Aorta (tissue), 5 donors: ENCODE measurements at regions of chr9 and their contacts with region 1.

Region 1: DNA sequence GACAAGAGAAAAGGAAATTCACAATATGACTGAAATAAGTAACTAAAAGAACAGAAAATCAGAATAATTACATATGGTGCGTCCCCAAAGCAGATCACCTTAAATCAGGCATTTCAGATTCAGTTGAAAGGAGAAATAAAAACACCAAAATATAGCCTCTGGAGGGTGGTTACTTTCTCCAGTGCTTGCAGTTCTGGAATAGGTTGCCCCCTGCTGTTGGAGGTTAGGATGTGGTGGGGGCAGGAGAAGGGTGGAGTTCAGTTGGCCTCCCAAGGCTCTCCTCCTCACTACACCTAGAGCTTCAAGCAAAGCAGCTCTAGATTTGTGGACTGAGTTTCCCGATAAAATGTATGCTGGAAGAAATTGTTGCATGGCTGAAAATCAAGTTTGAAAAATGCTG is 338.2 kb upstream of the TLE4 start:
- DNase-seq: no peak
- ATAC-seq: no peak
- H3K4me3 ChIP-seq: no peak overlapping the region
- H3K27ac ChIP-seq: no peak overlapping the region
- H3K4me1 ChIP-seq: no peaks in the 10 kb centered on the region
- H3K27me3 ChIP-seq: no peaks in the 10 kb centered on the region

Region 2: DNA sequence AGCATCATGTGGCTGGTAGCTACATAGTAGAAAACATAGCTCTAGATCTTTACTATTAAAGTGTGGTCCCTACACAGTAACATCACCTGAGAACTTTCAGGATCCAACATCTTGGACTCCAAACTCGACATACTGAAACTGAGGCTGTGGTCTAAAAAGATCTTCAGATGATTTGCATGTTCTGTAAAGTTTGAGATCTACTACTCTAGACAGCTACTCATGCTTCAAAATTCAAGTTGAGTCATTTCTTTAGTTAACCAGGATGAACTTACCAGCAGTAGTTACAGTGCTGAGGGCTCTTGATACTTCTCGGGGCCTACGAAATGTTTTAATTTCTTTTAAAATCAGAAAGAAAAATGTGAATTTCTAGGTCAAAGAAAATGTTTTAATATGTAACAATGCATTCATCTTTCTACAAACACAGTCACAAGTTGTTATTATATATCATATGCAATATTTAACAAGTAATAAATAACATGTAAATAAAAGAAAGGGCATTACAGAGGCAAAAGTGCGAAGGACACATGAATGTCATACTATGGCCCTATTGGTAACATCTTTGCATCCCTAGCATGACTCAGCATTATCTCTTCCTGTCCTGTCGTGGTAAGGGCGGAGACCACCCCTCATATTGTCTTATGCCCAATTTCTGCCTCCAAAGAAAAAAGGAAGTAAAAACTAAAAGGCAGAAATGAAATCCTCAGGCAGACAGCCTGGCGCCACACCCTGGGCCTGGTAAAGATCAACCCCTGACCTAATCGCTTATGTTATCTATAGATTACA is 225.7 kb before region 1 on chr9:
- intact Hi-C with region 1: no loop called
- DNase-seq: no peak
- ATAC-seq: no peak
- H3K4me3 ChIP-seq: no peak overlapping the region
- H3K27ac ChIP-seq: no peak overlapping the region
- H3K4me1 ChIP-seq: no peaks in the 10 kb centered on the region
- H3K27me3 ChIP-seq: no peaks in the 10 kb centered on the region

Region 3: GRCh38 chr9:79129865-79130480 is 103.6 kb before region 1 on chr9:
- intact Hi-C with region 1: loop called in 1 of 2 experiments (anchors 5 kb)
- DNase-seq: peak; percentile 64 to 72
- ATAC-seq: peak; percentile 60
- H3K4me3 ChIP-seq: no peak overlapping the region
- H3K27ac ChIP-seq: no peak overlapping the region
- H3K4me1 ChIP-seq: no peaks in the 10 kb centered on the region
- H3K27me3 ChIP-seq: no peaks in the 10 kb centered on the region

Region 4: DNA sequence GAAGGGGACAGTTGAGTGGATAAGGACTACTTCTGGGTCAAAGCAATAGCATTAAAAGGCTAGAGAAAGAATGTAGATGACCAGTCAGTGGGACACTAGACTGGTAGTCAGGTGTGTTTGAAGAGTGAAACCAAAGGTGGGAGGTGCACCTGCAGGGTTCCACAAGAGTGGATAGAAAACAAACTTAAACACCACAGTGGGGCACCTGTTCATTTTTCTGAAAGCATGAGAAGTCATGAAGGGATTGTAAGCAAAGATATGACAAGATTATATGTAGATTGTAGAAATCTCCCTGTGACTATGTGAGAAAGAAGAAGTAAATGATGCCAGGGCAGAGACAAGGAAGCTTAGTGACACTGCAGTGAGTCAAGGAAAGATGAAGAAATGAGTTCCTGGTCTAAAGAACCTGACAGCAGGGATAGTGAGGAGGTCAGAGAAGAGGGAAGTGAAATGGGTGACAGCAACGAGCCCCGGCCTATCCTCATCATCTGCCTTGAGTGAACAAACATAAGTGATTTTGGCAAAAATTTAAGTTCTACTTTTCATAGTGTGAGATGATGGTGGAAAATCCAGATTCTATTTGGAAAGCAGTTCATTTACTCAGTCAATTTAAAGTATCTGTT is 635.1 kb after region 1 on chr9:
- intact Hi-C with region 1: no loop called
- DNase-seq: no peak
- ATAC-seq: no peak
- H3K4me3 ChIP-seq: no peak overlapping the region
- H3K27ac ChIP-seq: no peak overlapping the region
- H3K4me1 ChIP-seq: no peaks in the 10 kb centered on the region
- H3K27me3 ChIP-seq: no peaks in the 10 kb centered on the region